Activated CD4-positive, alpha-beta memory T cell treated with anti-CD3 and anti-CD28 coated beads for 36 hours (primary cell): ENCODE measurements at regions of chr6 and their contacts with region 1.

Region 1: GRCh38 chr6:148250975-148251685 is 91.5 kb upstream of the SASH1 start:
- DNase-seq: no peak
- H3K4me3 Mint-ChIP-seq: no peak overlapping the region
- H3K27ac Mint-ChIP-seq: no peak overlapping the region
- H3K4me1 Mint-ChIP-seq: no peaks in the 10 kb centered on the region
- H3K27me3 Mint-ChIP-seq: peaks cover 9% of the 10 kb centered on the region

Region 2: DNA sequence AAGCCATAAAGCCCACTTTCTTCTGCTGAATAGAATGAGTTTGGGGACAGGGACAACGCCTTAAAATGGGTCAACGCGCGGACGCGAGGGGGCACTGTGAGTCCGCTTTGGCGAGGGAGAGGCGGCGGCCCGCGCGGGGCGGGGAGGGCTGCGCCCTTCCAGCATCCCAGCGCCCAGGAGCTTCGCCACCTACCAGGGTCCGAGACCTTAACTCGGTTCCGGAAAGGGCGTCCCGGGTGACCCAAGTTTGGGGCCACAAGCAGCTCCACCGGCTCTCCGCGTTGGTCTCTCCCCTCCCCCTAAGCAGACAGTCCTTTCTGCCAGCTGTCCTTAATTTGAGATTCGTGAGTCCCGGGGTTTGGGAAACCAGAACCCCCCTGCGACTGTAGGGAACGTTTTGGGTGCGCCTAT is 744.4 kb before region 1 on chr6:
- CTCF ChIA-PET with region 1: no interaction called
- POLR2A ChIA-PET with region 1: no interaction called
- intact Hi-C with region 1: loop called (anchors 5 kb)
- DNase-seq: peak; percentile 71
- H3K4me3 Mint-ChIP-seq: no peak overlapping the region
- H3K27ac Mint-ChIP-seq: no peak overlapping the region
- H3K4me1 Mint-ChIP-seq: peaks cover 17% of the 10 kb centered on the region
- H3K27me3 Mint-ChIP-seq: peaks cover 55% of the 10 kb centered on the region

Region 3: GRCh38 chr6:148177589-148178233 is 73.4 kb before region 1 on chr6:
- CTCF ChIA-PET with region 1: interaction called, 36 read pairs
- POLR2A ChIA-PET with region 1: no interaction called
- intact Hi-C with region 1: loop called (anchors 1 kb)
- DNase-seq: peak; percentile 35
- H3K4me3 Mint-ChIP-seq: no peak overlapping the region
- H3K27ac Mint-ChIP-seq: no peak overlapping the region
- H3K4me1 Mint-ChIP-seq: no peaks in the 10 kb centered on the region
- H3K27me3 Mint-ChIP-seq: peaks cover 17% of the 10 kb centered on the region